Panc1 (cell line): ENCODE measurements at regions of chr12 and their contacts with region 1.

Region 1: GRCh38 chr12:21843795-21844194 is 69.3 kb upstream of the KCNJ8 start:
- DNase-seq: no peak
- ATAC-seq: no peak
- H3K4me3 ChIP-seq: no peak overlapping the region
- H3K27ac ChIP-seq: no peak overlapping the region
- H3K4me1 ChIP-seq: no peaks in the 10 kb centered on the region
- H3K27me3 ChIP-seq: no peaks in the 10 kb centered on the region
- CTCF ChIP-seq: no peak

Region 2: GRCh38 chr12:21877293-21877982 is 33.6 kb after region 1 on chr12:
- CTCF ChIA-PET with region 1: no interaction called
- POLR2A ChIA-PET with region 1: no interaction called
- in situ Hi-C with region 1: no loop called
- intact Hi-C with region 1: no loop called
- DNase-seq: no peak
- ATAC-seq: no peak
- H3K4me3 ChIP-seq: no peak overlapping the region
- H3K27ac ChIP-seq: no peak overlapping the region
- H3K4me1 ChIP-seq: no peaks in the 10 kb centered on the region
- H3K27me3 ChIP-seq: no peaks in the 10 kb centered on the region
- CTCF ChIP-seq: no peak

Region 3: GRCh38 chr12:22443379-22444316 is 599.9 kb after region 1 on chr12:
- CTCF ChIA-PET with region 1: interaction called, 11 read pairs
- POLR2A ChIA-PET with region 1: no interaction called
- in situ Hi-C with region 1: no loop called
- intact Hi-C with region 1: no loop called
- DNase-seq: peak; percentile 45
- ATAC-seq: peak; percentile 99
- H3K4me3 ChIP-seq: no peak overlapping the region
- H3K27ac ChIP-seq: no peak overlapping the region
- H3K4me1 ChIP-seq: no peaks in the 10 kb centered on the region
- H3K27me3 ChIP-seq: no peaks in the 10 kb centered on the region
- CTCF ChIP-seq: peak; percentile 75